ENCODE measurements at regions of chr3 and their contacts with region 1.

Region 1: GRCh38 chr3:111956995-111957734 is 21.7 kb upstream of the ABHD10 start:
- DNase-seq: no peak
- ATAC-seq: no peak
- H3K4me3 ChIP-seq: no peak overlapping the region
- H3K27ac ChIP-seq: no peak overlapping the region
- H3K4me1 ChIP-seq: peaks cover 0 to 27% (median 9%) of the 10 kb centered on the region in 12 donors
- H3K27me3 ChIP-seq: no peaks in the 10 kb centered on the region
- CTCF ChIP-seq: no peak
- POLR2A ChIP-seq: no peak

Region 2: DNA sequence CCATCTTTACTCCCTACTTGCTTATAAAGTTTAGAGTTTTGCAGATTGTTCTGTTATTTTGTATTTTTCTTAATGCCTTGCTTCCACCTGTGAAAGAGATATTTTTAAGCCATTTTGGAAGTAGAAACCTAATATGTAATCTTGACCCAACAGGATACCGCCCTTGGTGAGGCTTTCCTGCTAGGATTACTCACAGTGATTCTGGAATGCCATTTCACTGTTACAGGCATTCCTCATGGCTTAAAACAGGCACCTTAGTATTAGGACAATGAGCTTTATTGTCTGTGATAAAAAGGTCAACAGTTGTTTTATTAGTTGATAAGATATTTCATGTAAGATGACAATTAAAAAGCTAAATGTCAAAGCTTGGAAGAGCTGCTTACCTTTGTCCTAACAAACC is 39.9 kb before region 1 on chr3:
- intact Hi-C with region 1: loop called in 2 of 10 experiments (anchors 5 kb)
- DNase-seq: no peak
- ATAC-seq: peak in 3 of 4 donors; percentile 70 to 78 (median 72)
- H3K4me3 ChIP-seq: no peak overlapping the region
- H3K27ac ChIP-seq: peak overlapping the region in 5 of 12 donors; percentile 24 to 64 (median 34)
- H3K4me1 ChIP-seq: peaks cover 4 to 54% (median 31%) of the 10 kb centered on the region in 12 donors
- H3K27me3 ChIP-seq: no peaks in the 10 kb centered on the region
- CTCF ChIP-seq: no peak
- POLR2A ChIP-seq: no peak

Region 3: DNA sequence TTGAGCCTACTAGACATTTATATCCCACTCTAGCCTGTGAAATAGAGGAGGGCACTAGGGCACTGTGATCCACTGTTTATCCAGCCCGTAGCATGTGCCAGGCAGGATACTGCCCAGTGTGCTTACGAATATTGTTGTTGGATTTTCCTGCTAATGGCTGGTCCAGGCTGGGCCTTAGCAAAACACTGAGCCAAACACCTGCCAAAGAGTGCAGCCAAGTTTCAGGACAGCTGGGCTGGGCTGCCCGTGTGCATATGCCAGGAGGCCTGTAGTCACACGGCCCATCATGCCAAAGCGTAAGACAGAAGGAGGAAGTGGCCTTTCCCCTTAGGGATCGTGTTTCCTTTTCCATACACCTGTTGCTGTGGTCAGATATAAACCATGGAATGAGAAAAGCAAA is 32.9 kb before region 1 on chr3:
- intact Hi-C with region 1: loop called in 3 of 10 experiments (anchors 5 kb)
- DNase-seq: peak; percentile 69 to 83 (median 73)
- ATAC-seq: peak; percentile 95 to 98 (median 98)
- H3K4me3 ChIP-seq: no peak overlapping the region
- H3K27ac ChIP-seq: peak overlapping the region in 11 of 12 donors; percentile 12 to 76 (median 51)
- H3K4me1 ChIP-seq: peaks cover 0 to 46% (median 25%) of the 10 kb centered on the region in 12 donors
- H3K27me3 ChIP-seq: no peaks in the 10 kb centered on the region
- CTCF ChIP-seq: no peak
- POLR2A ChIP-seq: no peak

Measured in heart left ventricle (tissue), 16 donors.